Uterus (tissue), 4 donors: ENCODE measurements at regions of chr9 and their contacts with region 1.

Region 1: GRCh38 chr9:137302176-137302994 is at the start of gene NRARP:
- DNase-seq: peak; percentile 77 to 79
- H3K4me3 ChIP-seq: peak within 1 kb of the TSS; percentile 26 to 41
- H3K27ac ChIP-seq: peak within 1 kb of the TSS; percentile 77 to 78
- H3K4me1 ChIP-seq: peaks cover 0 to 35% of the 10 kb centered on the region in 2 donors
- H3K27me3 ChIP-seq: peaks cover 23 to 29% of the 10 kb centered on the region in 2 donors
- CTCF ChIP-seq: peak in 3 of 4 experiments; percentile 37 to 44 (median 38)
- POLR2A ChIP-seq: peak; percentile 59 to 90
- total RNA-seq, gene NRARP: 0.29 to 16.5 (median 11.4) TPM

Region 2: GRCh38 chr9:137411671-137412380 is 109.4 kb after region 1 on chr9:
- intact Hi-C with region 1: loop called (anchors 10 kb)
- DNase-seq: peak; percentile 72 to 79
- H3K4me3 ChIP-seq: no peak overlapping the region
- H3K27ac ChIP-seq: peak overlapping the region; percentile 63 to 82
- H3K4me1 ChIP-seq: peaks cover 0 to 19% of the 10 kb centered on the region in 2 donors
- H3K27me3 ChIP-seq: peaks cover 0 to 5% of the 10 kb centered on the region in 2 donors
- CTCF ChIP-seq: no peak
- POLR2A ChIP-seq: no peak